WTC11 (cell line): ENCODE measurements at regions of chr2 and their contacts with region 1.

Region 1: GRCh38 chr2:73156539-73157124 is 43.9 kb upstream of the RAB11FIP5 start:
- DNase-seq: peak; percentile 88
- ATAC-seq: peak; percentile 99
- H3K4me3 Mint-ChIP-seq: peak overlapping the region; percentile 62
- H3K27ac Mint-ChIP-seq: no peak overlapping the region
- H3K4me1 Mint-ChIP-seq: peaks cover 6% of the 10 kb centered on the region
- H3K27me3 Mint-ChIP-seq: peaks cover 24% of the 10 kb centered on the region
- CTCF ChIP-seq: peak; percentile 51

Region 2: DNA sequence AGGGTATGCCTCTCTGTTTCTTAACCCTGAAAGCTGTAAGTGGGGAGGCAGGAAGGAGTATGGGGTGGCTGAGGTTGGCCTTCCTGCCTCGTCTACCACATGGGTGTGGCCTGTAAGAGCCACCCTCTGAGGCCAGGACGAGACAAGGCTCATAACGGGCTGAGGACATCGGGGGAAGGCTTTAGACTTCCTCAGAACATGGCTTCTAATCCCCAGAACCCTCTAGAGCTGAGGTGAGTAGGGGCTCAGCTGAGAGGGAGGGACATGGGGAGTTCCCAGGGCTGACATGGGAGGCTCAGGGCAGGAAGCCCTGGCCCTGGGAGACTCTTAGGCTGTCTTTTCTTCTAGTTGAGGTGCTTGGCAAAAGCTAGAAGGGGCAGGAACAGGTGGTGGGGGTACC is 202.7 kb before region 1 on chr2:
- CTCF ChIA-PET with region 1: interaction called, 12 read pairs
- POLR2A ChIA-PET with region 1: no interaction called
- DNase-seq: no peak
- ATAC-seq: no peak
- H3K4me3 Mint-ChIP-seq: no peak overlapping the region
- H3K27ac Mint-ChIP-seq: no peak overlapping the region
- H3K4me1 Mint-ChIP-seq: peaks cover 51% of the 10 kb centered on the region
- H3K27me3 Mint-ChIP-seq: no peaks in the 10 kb centered on the region
- CTCF ChIP-seq: no peak

Region 3: DNA sequence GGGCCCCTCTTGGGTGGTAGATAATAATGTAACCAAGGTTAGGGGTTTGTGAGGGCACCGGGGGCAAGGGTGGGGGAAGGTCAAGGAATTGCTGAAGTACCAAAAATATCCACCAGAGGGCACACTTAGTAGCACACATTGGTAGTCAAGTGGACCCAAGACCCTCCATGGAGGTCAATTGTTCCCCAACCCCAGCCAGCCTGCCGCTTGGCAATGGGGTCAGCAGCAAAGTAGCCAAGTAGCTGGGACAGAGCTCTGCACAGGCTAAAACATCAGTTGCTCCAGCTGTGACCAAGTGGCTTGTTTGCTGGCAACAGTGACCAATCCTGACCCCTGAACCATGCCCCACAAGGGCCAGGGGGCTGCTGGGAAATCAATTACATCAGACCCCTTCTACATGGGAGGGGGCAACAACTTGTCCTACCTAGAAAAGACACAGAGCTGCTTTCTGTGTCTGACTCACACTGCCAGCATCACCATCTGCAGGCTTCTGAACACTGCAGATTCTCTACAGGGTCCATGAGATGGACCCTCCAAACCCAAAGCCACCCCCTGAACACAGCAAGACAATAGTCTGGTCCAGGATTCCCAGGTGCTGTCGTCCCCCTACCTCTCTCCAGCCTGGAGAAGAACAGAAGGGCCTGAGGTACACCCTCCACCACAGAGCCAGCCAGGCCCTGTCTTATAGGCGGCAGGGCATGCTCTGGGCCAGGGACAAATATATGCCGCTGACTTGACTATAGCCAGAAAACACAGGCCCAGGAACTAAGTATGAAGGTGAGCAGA is 163.3 kb before region 1 on chr2:
- CTCF ChIA-PET with region 1: interaction called, 14 read pairs
- POLR2A ChIA-PET with region 1: no interaction called
- DNase-seq: peak; percentile 59
- ATAC-seq: peak; percentile 72
- H3K4me3 Mint-ChIP-seq: no peak overlapping the region
- H3K27ac Mint-ChIP-seq: 0 out of 2 replicates have a peak overlapping the region, but pooled peaks have one; percentile 57
- H3K4me1 Mint-ChIP-seq: peaks cover 11% of the 10 kb centered on the region; the same call in 1 of the 2 replicates
- H3K27me3 Mint-ChIP-seq: no peaks in the 10 kb centered on the region; the same call in 1 of the 2 replicates
- CTCF ChIP-seq: peak; percentile 89

Region 4: GRCh38 chr2:73035899-73036711 is 120.5 kb before region 1 on chr2:
- CTCF ChIA-PET with region 1: interaction called, 12 read pairs
- POLR2A ChIA-PET with region 1: no interaction called
- DNase-seq: peak; percentile 53
- ATAC-seq: peak; percentile 97
- H3K4me3 Mint-ChIP-seq: no peak overlapping the region
- H3K27ac Mint-ChIP-seq: no peak overlapping the region
- H3K4me1 Mint-ChIP-seq: peaks cover 19% of the 10 kb centered on the region
- H3K27me3 Mint-ChIP-seq: no peaks in the 10 kb centered on the region
- CTCF ChIP-seq: no peak

Region 5: DNA sequence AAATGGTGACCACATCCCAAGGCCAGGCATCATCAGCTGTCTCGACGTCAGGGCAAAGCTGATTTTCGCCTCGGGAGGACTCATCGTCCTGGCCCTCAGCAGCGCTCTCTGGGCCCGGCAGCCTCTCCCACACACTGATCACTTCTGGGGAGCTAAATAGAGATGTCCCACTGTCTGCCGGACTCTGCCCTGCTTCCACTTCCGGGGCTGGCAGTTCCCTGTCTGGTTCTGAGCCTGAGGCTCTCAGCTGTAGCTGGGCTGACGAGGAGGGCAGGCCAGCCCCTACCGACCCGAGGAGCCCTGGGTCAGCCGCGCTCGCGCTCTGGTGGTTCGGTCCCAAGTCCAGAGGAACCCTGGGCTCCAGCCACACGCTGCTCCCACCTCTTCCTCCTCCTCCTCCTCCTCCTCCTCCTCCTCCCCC is 75.9 kb before region 1 on chr2:
- CTCF ChIA-PET with region 1: interaction called, 113 read pairs
- POLR2A ChIA-PET with region 1: interaction called, 5 read pairs
- DNase-seq: no peak
- ATAC-seq: no peak
- H3K4me3 Mint-ChIP-seq: no peak overlapping the region
- H3K27ac Mint-ChIP-seq: no peak overlapping the region
- H3K4me1 Mint-ChIP-seq: peaks cover 15% of the 10 kb centered on the region
- H3K27me3 Mint-ChIP-seq: no peaks in the 10 kb centered on the region
- CTCF ChIP-seq: no peak

Region 6: GRCh38 chr2:73091164-73091563 is 65.5 kb before region 1 on chr2:
- CTCF ChIA-PET with region 1: interaction called, 113 read pairs
- POLR2A ChIA-PET with region 1: interaction called, 5 read pairs
- DNase-seq: no peak
- ATAC-seq: no peak
- H3K4me3 Mint-ChIP-seq: no peak overlapping the region
- H3K27ac Mint-ChIP-seq: no peak overlapping the region
- H3K4me1 Mint-ChIP-seq: no peaks in the 10 kb centered on the region
- H3K27me3 Mint-ChIP-seq: no peaks in the 10 kb centered on the region
- CTCF ChIP-seq: no peak

Region 7: DNA sequence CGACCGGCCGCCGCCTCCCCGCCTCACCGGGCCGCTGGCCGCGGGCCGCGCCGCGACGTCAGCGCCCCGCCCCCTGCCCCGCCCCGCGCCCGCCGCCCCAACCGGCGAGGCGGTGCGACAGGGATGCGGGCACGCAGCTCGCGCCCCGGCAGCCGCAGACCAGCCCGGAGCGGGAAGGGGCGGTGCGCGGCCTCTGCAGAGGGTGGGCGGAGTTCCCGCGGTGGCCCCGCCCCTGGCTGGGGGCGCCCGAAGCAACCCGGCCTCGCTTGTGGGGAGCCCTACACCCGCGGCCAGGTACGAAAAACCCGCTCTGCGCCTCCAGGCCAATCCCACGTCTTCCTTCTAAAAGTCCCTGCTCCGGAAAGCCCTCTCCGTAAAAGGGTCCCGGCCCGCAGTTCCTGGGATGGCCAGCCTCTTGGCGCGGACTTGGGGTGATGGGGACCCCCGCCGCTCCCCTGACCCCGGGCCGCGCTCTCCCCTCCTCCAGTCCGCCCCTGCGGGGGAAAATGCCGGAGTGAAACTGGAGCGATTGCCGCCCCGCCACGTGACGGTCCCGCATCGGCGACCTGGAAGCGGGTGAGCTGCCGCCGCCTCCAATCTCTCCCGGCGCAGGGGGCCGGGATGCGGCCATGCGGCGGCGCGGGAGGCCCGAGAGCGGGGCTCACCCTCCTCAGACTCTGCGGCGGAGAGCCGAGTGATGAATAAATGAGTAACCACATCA is 43.6 kb before region 1 on chr2 and contains the start of gene RAB11FIP5:
- CTCF ChIA-PET with region 1: interaction called, 48 read pairs
- POLR2A ChIA-PET with region 1: no interaction called
- DNase-seq: peak; percentile 86
- ATAC-seq: peak; percentile 87
- H3K4me3 Mint-ChIP-seq: peak within 1 kb of the TSS; percentile 83
- H3K27ac Mint-ChIP-seq: no peak within 1 kb of the TSS
- H3K4me1 Mint-ChIP-seq: peaks cover 23% of the 10 kb centered on the region
- H3K27me3 Mint-ChIP-seq: peaks cover 26% of the 10 kb centered on the region
- CTCF ChIP-seq: no peak
- total RNA-seq, gene RAB11FIP5: 14.0 to 16.0 TPM (median 14.3 TPM) in 3 replicates

Region 8: GRCh38 chr2:73135236-73135635 is 21.4 kb before region 1 on chr2:
- CTCF ChIA-PET with region 1: no interaction called
- POLR2A ChIA-PET with region 1: no interaction called
- DNase-seq: no peak
- ATAC-seq: no peak
- H3K4me3 Mint-ChIP-seq: no peak overlapping the region
- H3K27ac Mint-ChIP-seq: no peak overlapping the region
- H3K4me1 Mint-ChIP-seq: peaks cover 12% of the 10 kb centered on the region; the same call in 1 of the 2 replicates
- H3K27me3 Mint-ChIP-seq: peaks cover 4% of the 10 kb centered on the region
- CTCF ChIP-seq: no peak

Region 9: DNA sequence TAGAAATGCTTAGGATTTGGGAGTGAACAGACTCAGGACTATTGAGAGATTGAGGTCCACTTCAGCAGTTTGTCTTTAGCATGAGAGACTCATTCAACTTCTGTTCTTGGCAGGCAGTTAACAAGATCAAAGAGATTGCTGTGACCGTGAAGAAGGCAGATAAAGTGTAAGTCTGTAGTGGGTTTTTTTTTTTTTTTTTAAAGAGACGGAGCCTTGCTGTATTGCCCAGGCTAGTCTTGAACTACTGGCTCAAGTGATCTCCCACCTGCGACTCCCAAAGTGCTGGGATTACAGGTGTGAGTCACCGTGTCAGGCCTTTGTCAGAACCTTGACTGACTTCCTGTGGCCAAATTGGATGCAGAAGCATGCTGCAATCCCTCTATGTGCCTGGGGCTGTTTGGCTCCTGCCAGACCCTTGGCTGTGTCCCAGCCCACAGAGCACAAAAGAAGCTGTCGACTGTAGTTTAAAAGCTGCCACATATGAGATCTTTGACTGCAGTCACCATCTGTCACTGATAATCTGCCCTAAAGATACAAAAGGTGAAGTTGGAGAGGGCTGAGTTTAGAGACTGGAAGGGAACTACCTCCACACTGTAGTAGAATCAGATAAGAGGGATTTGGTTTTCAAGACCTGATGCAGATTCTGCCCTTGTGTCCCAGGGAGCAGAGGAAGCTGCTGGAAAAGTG is 87.4 kb after region 1 on chr2:
- CTCF ChIA-PET with region 1: no interaction called
- POLR2A ChIA-PET with region 1: no interaction called
- DNase-seq: no peak
- ATAC-seq: no peak
- H3K4me3 Mint-ChIP-seq: no peak overlapping the region
- H3K27ac Mint-ChIP-seq: no peak overlapping the region
- H3K4me1 Mint-ChIP-seq: no peaks in the 10 kb centered on the region
- H3K27me3 Mint-ChIP-seq: no peaks in the 10 kb centered on the region
- CTCF ChIP-seq: no peak